ENCODE measurements at regions of chr2 and their contacts with region 1.

Region 1: GRCh38 chr2:179751163-179751809 is 110.1 kb downstream of the ZNF385B start:
- DNase-seq: no peak
- H3K4me3 Mint-ChIP-seq: no peak overlapping the region
- H3K27ac Mint-ChIP-seq: no peak overlapping the region
- H3K4me1 Mint-ChIP-seq: peaks cover 17% of the 10 kb centered on the region
- H3K27me3 Mint-ChIP-seq: no peaks in the 10 kb centered on the region
- CTCF ChIP-seq: peak; percentile 64

Region 2: DNA sequence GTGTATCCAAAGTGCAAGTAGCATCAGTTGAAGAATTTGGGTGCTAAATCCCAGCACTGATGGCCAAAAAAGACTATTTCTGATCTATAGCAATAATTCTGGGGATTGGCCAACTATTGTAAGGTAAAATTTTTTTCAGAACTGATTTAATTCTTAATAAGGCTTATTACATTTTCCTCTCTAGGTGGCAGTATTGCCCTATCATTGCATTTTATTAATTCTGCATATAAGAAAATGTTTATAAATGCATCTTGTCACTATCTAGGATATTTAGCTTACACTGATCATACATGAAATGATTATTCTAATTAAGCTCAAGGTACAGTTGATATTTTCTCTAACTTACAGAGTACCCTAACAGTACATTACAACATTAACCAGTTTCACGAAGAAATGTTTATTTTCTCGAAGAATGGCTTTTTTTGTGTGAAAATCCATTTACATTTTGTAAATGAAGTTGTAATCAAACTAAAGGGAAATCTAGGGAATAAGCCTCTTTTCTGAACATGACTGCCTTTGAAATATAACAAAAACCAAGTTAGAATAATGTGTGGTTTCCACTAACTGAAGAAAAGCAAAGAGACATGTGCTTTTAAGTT is 955.1 kb before region 1 on chr2:
- CTCF ChIA-PET with region 1: no interaction called
- intact Hi-C with region 1: loop called (anchors 2 kb)
- DNase-seq: no peak
- H3K4me3 Mint-ChIP-seq: no peak overlapping the region
- H3K27ac Mint-ChIP-seq: no peak overlapping the region
- H3K4me1 Mint-ChIP-seq: no peaks in the 10 kb centered on the region
- H3K27me3 Mint-ChIP-seq: no peaks in the 10 kb centered on the region
- CTCF ChIP-seq: peak; percentile 53

Region 3: GRCh38 chr2:179218848-179219594 is 532.3 kb before region 1 on chr2:
- CTCF ChIA-PET with region 1: no interaction called
- intact Hi-C with region 1: loop called (anchors 5 kb)
- DNase-seq: peak; percentile 72
- H3K4me3 Mint-ChIP-seq: no peak overlapping the region
- H3K27ac Mint-ChIP-seq: no peak overlapping the region
- H3K4me1 Mint-ChIP-seq: peaks cover 24% of the 10 kb centered on the region
- H3K27me3 Mint-ChIP-seq: no peaks in the 10 kb centered on the region
- CTCF ChIP-seq: peak; percentile 80

Region 4: GRCh38 chr2:179354739-179355537 is 396.3 kb before region 1 on chr2:
- CTCF ChIA-PET with region 1: no interaction called
- intact Hi-C with region 1: loop called (anchors 5 kb)
- DNase-seq: no peak
- H3K4me3 Mint-ChIP-seq: no peak overlapping the region
- H3K27ac Mint-ChIP-seq: no peak overlapping the region
- H3K4me1 Mint-ChIP-seq: no peaks in the 10 kb centered on the region
- H3K27me3 Mint-ChIP-seq: no peaks in the 10 kb centered on the region
- CTCF ChIP-seq: peak; percentile 42

Region 5: GRCh38 chr2:179410552-179411356 is 340.5 kb before region 1 on chr2:
- CTCF ChIA-PET with region 1: no interaction called
- intact Hi-C with region 1: loop called (anchors 1 kb)
- DNase-seq: peak; percentile 67
- H3K4me3 Mint-ChIP-seq: no peak overlapping the region
- H3K27ac Mint-ChIP-seq: no peak overlapping the region
- H3K4me1 Mint-ChIP-seq: peaks cover 9% of the 10 kb centered on the region
- H3K27me3 Mint-ChIP-seq: no peaks in the 10 kb centered on the region
- CTCF ChIP-seq: peak; percentile 84

Region 6: DNA sequence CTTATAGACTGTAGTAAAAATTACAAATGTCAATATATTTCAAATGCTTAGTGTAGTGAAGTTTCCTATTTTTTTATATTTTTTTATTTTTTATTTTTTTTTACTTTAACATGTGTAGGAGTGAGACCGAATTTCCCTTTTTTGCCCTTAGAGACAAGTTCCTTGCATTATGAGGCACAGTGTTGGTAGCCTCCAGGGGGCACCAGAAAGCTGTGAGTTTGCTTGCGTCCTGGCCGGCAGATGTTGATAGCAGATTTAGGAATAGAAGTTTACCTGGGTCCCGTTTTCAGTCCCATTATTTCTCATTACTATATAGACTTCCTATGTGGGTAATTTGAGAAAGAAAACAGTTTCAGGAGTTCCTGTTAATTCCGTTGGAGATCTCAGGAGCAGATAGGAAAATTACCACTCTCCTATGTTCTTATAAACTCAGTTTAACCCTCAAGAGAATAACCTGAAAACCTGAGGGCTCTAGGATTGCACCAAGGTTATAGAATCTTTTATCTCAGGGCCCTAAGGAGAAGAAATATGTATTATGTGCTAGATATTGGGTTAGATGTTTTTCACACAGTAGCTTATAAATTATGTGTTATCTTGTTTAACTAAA is 329.1 kb before region 1 on chr2:
- CTCF ChIA-PET with region 1: interaction called, 4 read pairs
- intact Hi-C with region 1: loop called (anchors 1 kb)
- DNase-seq: peak; percentile 85
- H3K4me3 Mint-ChIP-seq: no peak overlapping the region
- H3K27ac Mint-ChIP-seq: no peak overlapping the region
- H3K4me1 Mint-ChIP-seq: peaks cover 6% of the 10 kb centered on the region
- H3K27me3 Mint-ChIP-seq: no peaks in the 10 kb centered on the region
- CTCF ChIP-seq: peak; percentile 84

Region 7: GRCh38 chr2:179580378-179581146 is 170.7 kb before region 1 on chr2:
- CTCF ChIA-PET with region 1: no interaction called
- intact Hi-C with region 1: loop called (anchors 1 kb)
- DNase-seq: peak; percentile 74
- H3K4me3 Mint-ChIP-seq: no peak overlapping the region
- H3K27ac Mint-ChIP-seq: peak overlapping the region; percentile 63
- H3K4me1 Mint-ChIP-seq: peaks cover 21% of the 10 kb centered on the region
- H3K27me3 Mint-ChIP-seq: no peaks in the 10 kb centered on the region
- CTCF ChIP-seq: no peak